Caco-2 (cell line): ENCODE measurements at regions of chr10 and their contacts with region 1.

Region 1: DNA sequence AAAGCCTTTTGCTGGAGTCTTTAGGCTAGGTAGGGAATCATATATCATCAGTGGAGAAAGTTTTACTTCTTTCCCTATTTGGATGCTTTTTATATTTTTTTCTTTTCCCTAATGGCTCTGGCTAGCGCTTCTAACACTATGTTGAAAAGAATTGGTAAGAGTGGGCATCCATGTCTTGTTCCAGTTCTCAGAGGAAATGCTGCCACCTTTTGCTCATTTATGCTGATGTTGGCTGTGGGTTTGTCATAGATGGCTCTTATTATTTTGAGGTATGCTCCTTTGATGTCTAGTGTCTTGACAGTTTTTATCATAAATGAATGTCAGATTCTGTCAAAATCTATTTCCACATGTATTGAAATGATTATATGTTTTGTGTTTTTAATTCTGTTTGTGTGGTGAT is 1544.1 kb downstream of the REEP3 start:
- DNase-seq: peak in 1 of 2 experiments; percentile 46
- H3K4me3 ChIP-seq: no peak overlapping the region
- H3K4me3 Mint-ChIP-seq: no peak overlapping the region
- H3K27ac Mint-ChIP-seq: no peak overlapping the region
- H3K4me1 ChIP-seq: no peaks in the 10 kb centered on the region
- H3K4me1 Mint-ChIP-seq: no peaks in the 10 kb centered on the region
- H3K27me3 ChIP-seq: no peaks in the 10 kb centered on the region
- H3K27me3 Mint-ChIP-seq: no peaks in the 10 kb centered on the region
- CTCF ChIP-seq: peak; percentile 18 to 37

Region 2: GRCh38 chr10:64430690-64431323 is 634.5 kb before region 1 on chr10:
- CTCF ChIA-PET with region 1: no interaction called
- POLR2A ChIA-PET with region 1: no interaction called
- intact Hi-C with region 1: loop called (anchors 2 kb)
- DNase-seq: peak; percentile 57 to 67
- H3K4me3 ChIP-seq: no peak overlapping the region
- H3K4me3 Mint-ChIP-seq: no peak overlapping the region
- H3K27ac Mint-ChIP-seq: no peak overlapping the region
- H3K4me1 ChIP-seq: no peaks in the 10 kb centered on the region
- H3K4me1 Mint-ChIP-seq: no peaks in the 10 kb centered on the region
- H3K27me3 ChIP-seq: no peaks in the 10 kb centered on the region
- H3K27me3 Mint-ChIP-seq: no peaks in the 10 kb centered on the region
- CTCF ChIP-seq: peak; percentile 50 to 75

Region 3: DNA sequence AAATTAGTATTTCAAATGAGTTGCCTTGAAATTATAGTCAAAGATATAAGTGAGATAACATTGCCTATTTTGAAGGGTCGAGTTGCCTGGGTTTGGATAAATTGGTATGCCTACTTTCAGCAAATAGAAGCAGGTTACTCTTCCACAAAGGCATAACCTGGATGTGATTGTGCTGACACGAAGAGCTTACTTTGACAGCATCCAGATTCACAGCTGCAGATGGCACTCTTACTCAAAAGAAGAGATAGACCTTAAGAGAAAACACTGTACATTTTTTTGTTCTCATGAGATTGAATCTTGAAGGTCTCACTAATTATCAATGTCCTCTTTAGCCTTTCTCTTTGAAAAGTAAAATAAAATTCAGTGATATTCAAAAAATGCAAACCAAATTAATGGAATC is 205.4 kb before region 1 on chr10:
- CTCF ChIA-PET with region 1: no interaction called
- POLR2A ChIA-PET with region 1: no interaction called
- intact Hi-C with region 1: loop called (anchors 1 kb)
- DNase-seq: peak in 1 of 2 experiments; percentile 46
- H3K4me3 ChIP-seq: no peak overlapping the region
- H3K4me3 Mint-ChIP-seq: no peak overlapping the region
- H3K27ac Mint-ChIP-seq: no peak overlapping the region
- H3K4me1 ChIP-seq: 0 out of 2 replicates have a peak, but pooled peaks cover 2% of the 10 kb centered on the region
- H3K4me1 Mint-ChIP-seq: no peaks in the 10 kb centered on the region
- H3K27me3 ChIP-seq: no peaks in the 10 kb centered on the region
- H3K27me3 Mint-ChIP-seq: no peaks in the 10 kb centered on the region
- CTCF ChIP-seq: peak; percentile 35 to 72

Region 4: DNA sequence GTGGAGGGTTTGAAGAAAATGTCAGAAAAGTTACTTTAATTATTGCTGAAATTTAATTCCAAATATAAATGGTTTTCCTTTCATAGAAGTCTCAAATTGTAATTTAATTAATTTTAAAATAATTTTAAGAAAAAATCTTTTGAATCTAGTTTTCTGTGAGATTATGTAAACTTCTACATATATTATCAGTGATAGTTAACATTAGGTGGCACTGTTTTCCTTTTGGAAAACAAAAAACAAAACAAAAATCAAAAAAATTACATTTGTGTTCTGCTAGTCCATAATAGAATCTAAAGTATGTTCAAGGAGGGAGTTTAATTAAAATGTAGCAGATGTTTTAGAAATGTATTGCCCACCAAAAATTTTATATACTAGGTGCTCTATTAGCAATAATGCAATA is 87.4 kb before region 1 on chr10:
- CTCF ChIA-PET with region 1: no interaction called
- POLR2A ChIA-PET with region 1: no interaction called
- intact Hi-C with region 1: loop called (anchors 2 kb)
- DNase-seq: no peak
- H3K4me3 ChIP-seq: no peak overlapping the region
- H3K4me3 Mint-ChIP-seq: no peak overlapping the region
- H3K27ac Mint-ChIP-seq: no peak overlapping the region
- H3K4me1 ChIP-seq: no peaks in the 10 kb centered on the region
- H3K4me1 Mint-ChIP-seq: no peaks in the 10 kb centered on the region
- H3K27me3 ChIP-seq: no peaks in the 10 kb centered on the region
- H3K27me3 Mint-ChIP-seq: no peaks in the 10 kb centered on the region
- CTCF ChIP-seq: peak in 1 of 2 experiments; percentile 25